ENCODE measurements at regions of chr1 and their contacts with region 1.

Region 1: GRCh38 chr1:58162952-58163550 is 383.5 kb downstream of the OMA1 start:
- DNase-seq: peak; percentile 30 to 61 (median 34)
- ATAC-seq: peak; percentile 89
- H3K4me3 ChIP-seq: no peak overlapping the region
- H3K27ac ChIP-seq: no peak overlapping the region
- H3K4me1 ChIP-seq: no peaks in the 10 kb centered on the region
- H3K27me3 ChIP-seq: no peaks in the 10 kb centered on the region
- CTCF ChIP-seq: peak; percentile 59 to 84 (median 79)
- EP300 ChIP-seq: no peak
- POLR2A ChIP-seq: no peak
- RAD21 ChIP-seq: peak in 1 of 2 experiments; percentile 41; a peak in 3 of 4 replicates

Region 2: GRCh38 chr1:57162607-57163261 is 1000.3 kb before region 1 on chr1:
- CTCF ChIA-PET with region 1: no interaction called
- POLR2A ChIA-PET with region 1: no interaction called
- in situ Hi-C with region 1: no loop called
- intact Hi-C with region 1: no loop called
- DNase-seq: no peak
- ATAC-seq: no peak
- H3K4me3 ChIP-seq: no peak overlapping the region
- H3K27ac ChIP-seq: no peak overlapping the region
- H3K4me1 ChIP-seq: no peaks in the 10 kb centered on the region
- H3K27me3 ChIP-seq: peaks cover 5 to 7% of the 10 kb centered on the region in 2 experiments; a peak in 3 of 5 replicates
- CTCF ChIP-seq: no peak
- EP300 ChIP-seq: no peak
- POLR2A ChIP-seq: no peak
- RAD21 ChIP-seq: no peak

Region 3: GRCh38 chr1:58065520-58065919 is 97.5 kb before region 1 on chr1:
- CTCF ChIA-PET with region 1: no interaction called
- POLR2A ChIA-PET with region 1: no interaction called
- in situ Hi-C with region 1: no loop called
- intact Hi-C with region 1: loop called (anchors 5 kb)
- DNase-seq: peak in 1 of 4 experiments; percentile 5
- ATAC-seq: peak; percentile 66
- H3K4me3 ChIP-seq: no peak overlapping the region
- H3K27ac ChIP-seq: no peak overlapping the region
- H3K4me1 ChIP-seq: no peaks in the 10 kb centered on the region; a peak in 1 of 5 replicates
- H3K27me3 ChIP-seq: peaks cover 0 to 12% of the 10 kb centered on the region in 2 experiments; a peak in 1 of 5 replicates
- CTCF ChIP-seq: peak in 2 of 3 experiments; percentile 19 to 27; a peak in 1 of 6 replicates
- EP300 ChIP-seq: no peak
- POLR2A ChIP-seq: no peak
- RAD21 ChIP-seq: peak in 1 of 2 experiments; percentile 40; a peak in 2 of 4 replicates

Measured in K562 (cell line).